ENCODE measurements at regions of chr7 and their contacts with region 1.

Region 1: DNA sequence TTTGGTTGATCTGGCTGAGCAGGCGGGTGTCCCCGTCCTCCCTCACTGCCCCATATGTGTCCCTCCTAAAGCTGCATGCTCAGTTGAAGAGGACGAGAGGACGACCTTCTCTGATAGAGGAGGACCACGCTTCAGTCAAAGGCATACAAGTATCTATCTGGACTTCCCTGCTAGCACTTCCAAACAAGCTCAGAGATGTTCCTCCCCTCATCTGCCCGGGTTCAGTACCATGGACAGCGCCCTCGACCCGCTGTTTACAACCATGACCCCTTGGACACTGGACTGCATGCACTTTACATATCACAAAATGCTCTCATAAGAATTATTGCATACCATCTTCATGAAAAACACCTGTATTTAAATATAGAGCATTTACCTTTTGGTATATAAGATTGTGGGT is 26.9 kb upstream of the TRIM56 start:
- DNase-seq: no peak
- ATAC-seq: peak; percentile 77
- H3K4me3 ChIP-seq: no peak overlapping the region
- H3K27ac ChIP-seq: no peak overlapping the region
- H3K4me1 ChIP-seq: no peaks in the 10 kb centered on the region
- H3K27me3 ChIP-seq: no peaks in the 10 kb centered on the region
- CTCF ChIP-seq: no peak
- EP300 ChIP-seq: no peak
- POLR2A ChIP-seq: no peak
- RAD21 ChIP-seq: no peak

Region 2: GRCh38 chr7:100803398-100804233 is 254.7 kb before region 1 on chr7:
- CTCF ChIA-PET with region 1: interaction called, 6 read pairs
- POLR2A ChIA-PET with region 1: no interaction called
- RAD21 ChIA-PET with region 1: no interaction called
- SMC1A ChIA-PET with region 1: no interaction called
- in situ Hi-C with region 1: no loop called
- intact Hi-C with region 1: loop called (anchors 5 kb)
- DNase-seq: peak; percentile 56
- ATAC-seq: peak; percentile 98
- H3K4me3 ChIP-seq: peak overlapping the region; percentile 53
- H3K27ac ChIP-seq: peak overlapping the region; percentile 80
- H3K4me1 ChIP-seq: peaks cover 15% of the 10 kb centered on the region
- H3K27me3 ChIP-seq: no peaks in the 10 kb centered on the region
- CTCF ChIP-seq: no peak
- EP300 ChIP-seq: no peak
- POLR2A ChIP-seq: peak; percentile 47; the same call in 1 of the 2 replicates
- RAD21 ChIP-seq: no peak

Region 3: GRCh38 chr7:100896732-100897608 is 161.4 kb before region 1 on chr7:
- CTCF ChIA-PET with region 1: interaction called, 40 read pairs
- POLR2A ChIA-PET with region 1: no interaction called
- RAD21 ChIA-PET with region 1: interaction called, 7 read pairs
- SMC1A ChIA-PET with region 1: interaction called, 12 read pairs
- in situ Hi-C with region 1: loop called (anchors 5 kb)
- intact Hi-C with region 1: loop called (anchors 1 kb)
- DNase-seq: no peak
- ATAC-seq: peak; percentile 62
- H3K4me3 ChIP-seq: no peak overlapping the region
- H3K27ac ChIP-seq: no peak overlapping the region
- H3K4me1 ChIP-seq: peaks cover 7% of the 10 kb centered on the region
- H3K27me3 ChIP-seq: peaks cover 6 to 7% of the 10 kb centered on the region in 2 experiments
- CTCF ChIP-seq: peak; percentile 65 to 78 (median 76); a peak in 5 of 6 replicates
- EP300 ChIP-seq: no peak
- POLR2A ChIP-seq: no peak
- RAD21 ChIP-seq: peak; percentile 51

Region 4: DNA sequence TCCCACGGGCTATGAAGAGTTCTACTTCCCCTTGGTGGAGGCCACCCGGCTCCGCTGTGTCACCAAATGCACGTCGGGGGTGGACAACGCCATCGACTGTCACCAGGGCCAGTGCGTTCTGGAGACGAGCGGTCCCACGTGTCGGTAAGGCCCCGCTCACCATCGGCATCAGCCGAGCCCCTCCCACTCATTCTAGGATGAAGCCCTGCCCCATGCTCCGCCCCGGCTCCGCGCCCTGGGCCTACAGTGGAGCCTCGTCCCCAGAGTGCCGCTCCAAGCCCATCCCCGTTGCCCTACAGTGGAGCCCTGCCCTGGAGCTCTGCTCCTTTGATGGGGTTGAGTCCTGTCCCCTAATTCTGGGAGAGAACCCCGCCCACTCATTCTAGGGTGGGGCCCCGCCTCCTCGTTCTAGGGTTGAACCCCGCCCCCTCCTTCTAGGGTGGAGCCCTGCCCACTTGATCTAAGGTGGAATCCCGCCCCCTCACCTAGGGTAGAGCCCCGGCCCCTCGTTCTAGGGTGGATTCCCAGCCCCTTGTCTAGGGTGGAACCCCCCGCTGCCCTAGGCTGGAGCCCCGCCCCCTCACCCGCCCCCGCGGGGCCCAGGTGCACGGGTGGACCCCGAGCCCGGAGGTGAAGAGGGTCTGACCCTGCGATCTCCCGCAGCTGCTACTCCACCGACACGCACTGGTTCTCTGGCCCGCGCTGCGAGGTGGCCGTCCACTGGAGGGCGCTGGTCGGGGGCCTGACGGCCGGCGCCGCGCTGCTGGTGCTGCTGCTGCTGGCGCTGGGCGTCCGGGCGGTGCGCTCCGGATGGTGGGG is 92.4 kb before region 1 on chr7:
- CTCF ChIA-PET with region 1: interaction called, 4 read pairs
- POLR2A ChIA-PET with region 1: no interaction called
- RAD21 ChIA-PET with region 1: interaction called, 4 read pairs
- SMC1A ChIA-PET with region 1: no interaction called
- in situ Hi-C with region 1: loop called (anchors 5 kb)
- intact Hi-C with region 1: loop called (anchors 1 kb)
- DNase-seq: no peak
- ATAC-seq: peak; percentile 93
- H3K4me3 ChIP-seq: peak overlapping the region; percentile 30; the same call in 1 of the 2 replicates
- H3K27ac ChIP-seq: no peak overlapping the region
- H3K4me1 ChIP-seq: no peaks in the 10 kb centered on the region
- H3K27me3 ChIP-seq: peaks cover 3 to 15% of the 10 kb centered on the region in 2 experiments; a peak in 3 of 4 replicates
- CTCF ChIP-seq: peak; percentile 64 to 81 (median 80)
- EP300 ChIP-seq: no peak
- POLR2A ChIP-seq: no peak
- RAD21 ChIP-seq: peak; percentile 63

Region 5: DNA sequence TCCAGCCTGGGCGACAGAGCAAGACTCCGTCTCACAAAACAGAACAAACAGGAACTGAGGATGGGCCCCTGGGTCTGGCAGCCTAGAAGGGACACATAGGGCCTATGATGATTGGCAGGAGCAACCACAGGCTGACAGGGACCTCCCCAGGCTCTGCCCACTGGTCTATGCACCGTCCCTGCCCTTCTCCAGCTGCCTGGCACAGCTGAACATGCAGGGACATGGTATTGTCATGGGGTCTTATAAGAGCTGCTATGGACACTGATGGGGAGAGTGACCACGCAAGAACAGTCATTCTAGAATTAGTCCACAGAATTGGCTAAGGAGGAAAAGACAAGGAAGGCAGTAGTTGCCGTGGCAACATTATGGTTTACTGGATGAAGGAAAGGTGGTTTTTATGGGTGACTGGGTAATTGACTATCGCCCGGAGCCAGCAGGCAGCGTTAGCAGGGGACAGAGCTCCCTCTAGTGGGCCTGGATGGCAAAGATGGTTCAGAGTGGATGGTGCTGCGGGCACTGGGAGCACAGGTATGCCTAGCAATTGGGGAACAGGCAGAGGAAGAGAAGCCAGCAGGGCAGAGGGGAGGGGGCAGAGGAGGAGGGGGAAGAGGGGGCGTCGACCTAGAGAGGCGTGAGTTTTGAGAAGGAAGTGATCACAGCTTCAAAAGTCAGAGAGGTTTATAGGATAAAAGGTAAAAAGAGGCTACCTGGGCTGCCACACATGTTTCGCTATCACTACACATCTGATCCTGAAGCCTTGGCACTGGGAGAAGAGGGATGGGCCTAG is 19.1 kb after region 1 on chr7:
- CTCF ChIA-PET with region 1: interaction called, 14 read pairs
- POLR2A ChIA-PET with region 1: no interaction called
- RAD21 ChIA-PET with region 1: interaction called, 3 read pairs
- SMC1A ChIA-PET with region 1: no interaction called
- in situ Hi-C with region 1: no loop called
- intact Hi-C with region 1: no loop called
- DNase-seq: peak; percentile 49
- ATAC-seq: peak; percentile 99
- H3K4me3 ChIP-seq: no peak overlapping the region
- H3K27ac ChIP-seq: no peak overlapping the region
- H3K4me1 ChIP-seq: peaks cover 5% of the 10 kb centered on the region
- H3K27me3 ChIP-seq: no peaks in the 10 kb centered on the region
- CTCF ChIP-seq: peak; percentile 92 to 96 (median 96); a peak in 5 of 6 replicates
- EP300 ChIP-seq: 0 out of 4 replicates have a peak, but pooled peaks of 1 of the 2 experiments have one; percentile 12
- POLR2A ChIP-seq: no peak
- RAD21 ChIP-seq: peak; percentile 82

Measured in GM12878 (cell line).